ENCODE measurements at regions of chr1 and their contacts with region 1.

Region 1: DNA sequence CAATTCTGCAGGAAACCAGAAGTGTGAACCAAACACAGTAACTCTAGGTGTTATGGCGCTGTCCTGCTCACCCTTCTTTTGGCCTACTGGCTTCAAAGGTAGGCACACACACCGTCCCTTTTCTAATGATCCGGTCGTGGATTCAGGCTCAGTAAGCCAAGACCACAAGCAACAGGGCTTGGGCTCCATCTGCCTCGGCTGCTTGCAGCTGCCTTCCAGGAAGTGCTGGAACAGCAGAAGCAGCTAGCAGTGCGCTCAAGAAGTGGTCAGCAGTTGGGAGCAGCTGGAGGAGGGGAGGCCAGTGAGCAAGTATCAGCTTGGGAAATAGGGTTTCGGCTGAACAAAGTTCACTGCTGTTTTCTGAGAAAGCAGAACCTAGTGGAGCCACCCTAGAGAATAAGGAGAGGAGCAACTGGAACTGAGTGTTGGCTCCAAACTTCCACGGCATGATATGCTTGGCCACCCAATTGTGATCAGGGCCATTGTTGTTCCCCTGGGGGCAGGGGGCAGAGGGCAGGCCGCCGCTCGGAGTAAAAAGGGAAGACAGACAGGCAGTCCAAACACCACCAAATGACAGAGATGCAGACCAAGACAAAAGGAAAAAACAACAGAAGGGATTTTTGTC is 173.4 kb downstream of the TOMM20 start:
- DNase-seq: no peak
- ATAC-seq: peak; percentile 2; the same call in 1 of the 3 replicates
- H3K4me3 ChIP-seq: peak overlapping the region in 1 of 3 experiments; percentile 5; a peak in 1 of 6 replicates
- H3K27ac ChIP-seq: peak overlapping the region; percentile 100
- H3K4me1 ChIP-seq: peaks cover 85% of the 10 kb centered on the region
- H3K27me3 ChIP-seq: no peaks in the 10 kb centered on the region
- CTCF ChIP-seq: peak; percentile 5; the same call in 1 of the 2 replicates
- EP300 ChIP-seq: no peak; a peak in 1 of 4 replicates
- POLR2A ChIP-seq: 0 out of 4 replicates have a peak, but pooled peaks of 1 of the 2 experiments have one; percentile 36
- RAD21 ChIP-seq: 0 out of 2 replicates have a peak, but pooled peaks have one; percentile 10

Region 2: GRCh38 chr1:234599617-234600417 is 355.4 kb before region 1 on chr1:
- CTCF ChIA-PET with region 1: no interaction called
- POLR2A ChIA-PET with region 1: interaction called, 19 read pairs
- in situ Hi-C with region 1: no loop called
- intact Hi-C with region 1: no loop called
- DNase-seq: peak; percentile 85
- ATAC-seq: peak; percentile 85
- H3K4me3 ChIP-seq: peak overlapping the region; percentile 13 to 51 (median 44); a peak in 4 of 6 replicates
- H3K27ac ChIP-seq: peak overlapping the region; percentile 100
- H3K4me1 ChIP-seq: peaks cover 41% of the 10 kb centered on the region
- H3K27me3 ChIP-seq: no peaks in the 10 kb centered on the region; a peak in 1 of 5 replicates
- CTCF ChIP-seq: 0 out of 2 replicates have a peak, but pooled peaks have one; percentile 13
- EP300 ChIP-seq: no peak; a peak in 1 of 4 replicates
- POLR2A ChIP-seq: peak; percentile 26 to 63
- RAD21 ChIP-seq: peak; percentile 81

Region 3: GRCh38 chr1:234755449-234755863 is 199.8 kb before region 1 on chr1:
- CTCF ChIA-PET with region 1: no interaction called
- POLR2A ChIA-PET with region 1: interaction called, 4 read pairs
- in situ Hi-C with region 1: loop called (anchors 10 kb)
- intact Hi-C with region 1: loop called (anchors 1 kb)
- DNase-seq: no peak
- ATAC-seq: no peak
- H3K4me3 ChIP-seq: no peak overlapping the region
- H3K27ac ChIP-seq: no peak overlapping the region
- H3K4me1 ChIP-seq: peaks cover 55% of the 10 kb centered on the region
- H3K27me3 ChIP-seq: no peaks in the 10 kb centered on the region
- CTCF ChIP-seq: no peak
- EP300 ChIP-seq: no peak
- POLR2A ChIP-seq: no peak
- RAD21 ChIP-seq: no peak

Region 4: DNA sequence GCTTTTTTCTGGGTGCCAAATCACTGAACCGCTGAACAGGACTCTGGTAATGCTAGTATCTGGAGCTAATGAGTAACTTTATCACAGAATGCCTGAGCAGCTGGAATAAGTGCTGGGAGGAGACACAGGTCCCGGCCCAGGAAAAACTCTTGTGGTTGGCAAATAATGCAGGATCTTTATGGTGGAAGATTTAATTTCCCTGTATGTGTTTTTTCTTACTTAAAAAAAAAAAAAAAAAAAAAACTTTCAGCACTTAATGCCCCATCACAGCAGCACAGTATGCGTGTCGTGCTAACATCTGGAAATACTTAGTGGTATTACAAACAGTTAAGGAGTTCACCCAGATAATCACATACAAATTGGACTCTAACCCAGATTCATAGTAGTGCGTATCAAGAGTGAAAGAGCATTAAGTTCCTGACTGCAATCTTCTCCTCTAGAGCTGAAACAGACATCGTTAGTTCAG is 47.2 kb before region 1 on chr1:
- CTCF ChIA-PET with region 1: no interaction called
- POLR2A ChIA-PET with region 1: interaction called, 28 read pairs
- in situ Hi-C with region 1: no loop called
- intact Hi-C with region 1: no loop called
- DNase-seq: peak; percentile 51
- ATAC-seq: peak; percentile 91
- H3K4me3 ChIP-seq: peak overlapping the region in 1 of 3 experiments; percentile 41; a peak in 1 of 6 replicates
- H3K27ac ChIP-seq: peak overlapping the region; percentile 34
- H3K4me1 ChIP-seq: peaks cover 50% of the 10 kb centered on the region
- H3K27me3 ChIP-seq: no peaks in the 10 kb centered on the region
- CTCF ChIP-seq: no peak
- EP300 ChIP-seq: no peak
- POLR2A ChIP-seq: no peak
- RAD21 ChIP-seq: no peak

Region 5: DNA sequence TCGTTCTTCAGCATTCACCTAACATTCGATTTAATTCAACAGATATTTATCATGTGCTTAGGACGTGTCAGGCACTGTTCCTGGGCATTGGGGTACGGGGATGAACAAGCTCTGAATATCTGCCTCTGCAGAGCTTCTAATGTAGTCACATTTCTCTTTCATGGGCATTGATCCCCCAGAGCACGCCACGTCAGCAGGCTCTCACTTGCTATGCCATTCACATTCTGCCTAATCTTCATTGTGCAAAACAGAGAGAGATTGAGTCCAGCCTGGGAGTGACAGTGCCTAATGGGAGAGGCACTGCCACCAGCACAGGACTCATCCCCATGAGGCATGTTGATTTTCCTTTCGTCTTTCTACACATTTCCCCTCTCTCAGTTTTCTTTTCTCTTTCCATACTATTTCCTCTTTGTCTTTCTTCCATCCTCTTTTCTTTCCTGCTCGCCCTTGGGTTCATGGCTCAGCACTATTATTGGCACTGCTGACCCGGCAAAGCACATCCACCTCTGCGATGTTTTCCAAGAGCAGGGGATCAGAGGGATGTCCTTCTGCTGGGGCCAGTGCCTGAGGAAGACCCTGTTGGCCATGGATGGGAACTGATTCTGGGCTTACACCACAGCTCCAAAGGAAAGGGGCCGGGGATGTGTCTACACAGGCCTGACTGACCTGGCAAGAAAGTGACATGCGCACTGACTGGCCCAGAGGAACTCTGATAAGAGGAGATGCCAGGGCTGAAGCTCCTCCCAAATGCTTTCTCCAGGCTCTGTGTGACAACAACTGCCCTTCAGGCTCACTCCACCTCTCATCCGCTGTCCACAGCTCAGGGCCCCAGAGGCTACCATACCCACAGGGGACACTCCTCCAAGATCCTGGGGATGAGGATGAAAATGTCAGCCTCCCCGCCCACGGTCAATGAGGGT is 22.4 kb before region 1 on chr1:
- CTCF ChIA-PET with region 1: no interaction called
- POLR2A ChIA-PET with region 1: interaction called, 13 read pairs
- in situ Hi-C with region 1: no loop called
- intact Hi-C with region 1: no loop called
- DNase-seq: no peak
- ATAC-seq: peak; percentile 48; the same call in 2 of the 3 replicates
- H3K4me3 ChIP-seq: no peak overlapping the region
- H3K27ac ChIP-seq: no peak overlapping the region
- H3K4me1 ChIP-seq: peaks cover 25% of the 10 kb centered on the region; the same call in 1 of the 2 replicates
- H3K27me3 ChIP-seq: no peaks in the 10 kb centered on the region
- CTCF ChIP-seq: no peak
- EP300 ChIP-seq: no peak
- POLR2A ChIP-seq: no peak
- RAD21 ChIP-seq: no peak

Region 6: DNA sequence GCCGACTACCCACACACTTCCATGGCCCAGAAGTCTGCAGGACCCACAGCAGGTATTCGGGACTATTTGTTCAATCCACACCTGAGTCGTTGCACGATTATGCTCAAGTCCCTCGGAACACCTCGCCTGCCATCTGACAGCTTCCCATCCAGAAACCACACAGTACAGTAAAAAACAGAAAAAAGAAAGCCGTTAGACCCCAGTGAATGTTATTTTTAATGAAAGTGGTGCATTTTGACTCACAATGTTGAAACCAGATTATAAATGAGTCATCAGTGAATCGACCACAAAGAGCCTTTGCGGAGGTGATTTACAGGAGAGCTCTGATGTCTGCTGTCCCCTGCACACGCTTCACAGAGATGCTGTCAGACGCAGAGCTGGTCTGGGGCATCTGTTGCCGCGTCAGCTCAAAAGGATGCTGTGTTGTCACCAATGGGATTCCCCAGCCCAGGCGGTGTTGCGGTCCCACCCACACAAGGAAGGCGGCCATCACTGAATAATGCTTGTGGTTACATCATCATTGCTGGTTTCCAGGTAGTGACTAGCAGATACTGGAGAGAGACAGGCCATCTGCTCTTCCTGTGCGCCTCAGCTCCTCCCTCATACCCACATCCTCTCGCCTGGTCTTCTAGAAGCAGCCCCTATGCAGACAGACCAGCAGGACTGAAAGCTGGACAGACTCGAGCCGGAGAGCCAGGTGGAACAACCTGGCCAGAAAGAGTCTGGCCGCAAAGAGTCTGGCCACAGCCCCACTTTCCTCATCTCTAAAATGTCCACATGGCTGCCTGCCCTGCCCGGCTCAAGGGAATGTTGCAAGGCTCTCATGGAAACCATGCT is 56.6 kb after region 1 on chr1:
- CTCF ChIA-PET with region 1: no interaction called
- POLR2A ChIA-PET with region 1: no interaction called
- in situ Hi-C with region 1: no loop called
- intact Hi-C with region 1: no loop called
- DNase-seq: no peak
- ATAC-seq: peak; percentile 39
- H3K4me3 ChIP-seq: no peak overlapping the region
- H3K27ac ChIP-seq: no peak overlapping the region
- H3K4me1 ChIP-seq: peaks cover 26% of the 10 kb centered on the region
- H3K27me3 ChIP-seq: no peaks in the 10 kb centered on the region
- CTCF ChIP-seq: no peak
- EP300 ChIP-seq: no peak
- POLR2A ChIP-seq: no peak
- RAD21 ChIP-seq: no peak

Region 7: DNA sequence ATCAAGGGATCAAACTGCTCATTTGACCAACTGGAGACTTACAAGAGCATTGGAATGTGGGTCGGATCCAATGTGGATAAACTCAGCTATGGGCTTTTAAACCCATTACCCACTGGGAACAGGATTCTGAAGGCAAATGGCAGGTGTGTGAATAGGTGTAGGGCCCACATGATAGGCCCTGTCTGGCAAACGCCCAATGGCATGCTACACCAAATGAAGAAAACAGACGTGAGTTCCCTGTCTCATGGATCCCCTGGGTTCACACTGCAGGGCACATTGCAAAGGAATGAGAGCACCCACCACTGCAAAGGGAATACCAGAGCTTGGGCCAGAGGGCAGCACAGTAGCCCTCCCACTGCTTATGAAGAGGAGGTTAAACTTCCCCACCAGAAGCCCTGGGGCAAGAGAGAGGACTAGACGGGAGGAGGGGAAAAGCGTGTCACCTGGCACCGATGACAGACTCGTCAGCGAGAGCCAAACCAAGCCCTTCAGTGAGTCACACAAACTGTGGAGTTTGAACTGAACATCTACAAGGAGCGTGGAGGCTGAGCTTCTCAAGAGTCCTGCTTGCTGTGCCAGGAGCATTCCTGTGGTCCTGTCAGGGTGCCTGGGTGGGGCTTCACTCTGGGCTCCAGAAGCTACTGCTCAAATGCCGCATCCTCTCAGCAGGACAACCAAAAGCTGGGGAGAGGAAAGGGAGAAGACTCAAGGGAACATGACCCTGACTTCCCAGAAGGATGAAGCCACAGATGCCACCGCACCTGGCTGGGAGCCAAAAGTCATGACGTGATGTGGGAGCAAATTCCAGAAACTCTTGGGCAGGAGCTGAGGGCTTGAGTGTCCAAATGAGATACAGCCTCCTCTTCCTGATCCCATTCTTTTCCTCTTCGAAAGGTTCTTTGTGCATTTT is 112.3 kb after region 1 on chr1:
- CTCF ChIA-PET with region 1: no interaction called
- POLR2A ChIA-PET with region 1: interaction called, 100 read pairs
- in situ Hi-C with region 1: no loop called
- intact Hi-C with region 1: no loop called
- DNase-seq: peak; percentile 58
- ATAC-seq: peak; percentile 4; the same call in 2 of the 3 replicates
- H3K4me3 ChIP-seq: peak overlapping the region; percentile 41 to 76 (median 60); a peak in 5 of 6 replicates
- H3K27ac ChIP-seq: peak overlapping the region; percentile 86
- H3K4me1 ChIP-seq: peaks cover 97% of the 10 kb centered on the region
- H3K27me3 ChIP-seq: no peaks in the 10 kb centered on the region
- CTCF ChIP-seq: no peak
- EP300 ChIP-seq: no peak
- POLR2A ChIP-seq: peak in 1 of 2 experiments; percentile 21; a peak in 2 of 4 replicates
- RAD21 ChIP-seq: no peak